GM12878 (cell line): ENCODE measurements at regions of chr2 and their contacts with region 1.

Region 1: GRCh38 chr2:6896930-6897759 is 19.6 kb downstream of the RSAD2 start:
- DNase-seq: no peak
- ATAC-seq: peak; percentile 64
- H3K4me3 ChIP-seq: no peak overlapping the region
- H3K27ac ChIP-seq: no peak overlapping the region
- H3K4me1 ChIP-seq: no peaks in the 10 kb centered on the region
- H3K27me3 ChIP-seq: no peaks in the 10 kb centered on the region
- CTCF ChIP-seq: peak; percentile 50 to 81 (median 68); a peak in 5 of 6 replicates
- EP300 ChIP-seq: no peak
- POLR2A ChIP-seq: no peak
- RAD21 ChIP-seq: peak; percentile 89

Region 2: DNA sequence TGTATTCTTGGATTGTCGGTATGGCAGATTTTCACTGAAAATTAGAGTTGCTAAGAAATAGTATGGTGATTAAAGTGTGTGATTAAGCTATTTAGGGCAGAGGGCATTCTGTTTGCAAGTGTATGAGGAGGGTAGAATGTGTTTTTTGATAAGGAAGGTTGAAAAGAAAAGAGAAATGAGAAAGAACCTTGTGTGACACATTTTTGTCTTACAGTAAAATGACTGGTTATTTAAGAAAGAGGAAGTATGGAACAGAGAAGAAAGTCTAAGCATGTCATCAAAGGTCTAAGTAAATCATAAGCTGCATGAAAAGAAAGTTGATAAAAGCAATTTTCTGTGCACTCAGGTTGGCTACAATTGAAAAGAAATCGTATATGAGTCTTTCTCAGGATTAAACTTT is 24.8 kb before region 1 on chr2:
- CTCF ChIA-PET with region 1: interaction called, 16 read pairs
- POLR2A ChIA-PET with region 1: no interaction called
- RAD21 ChIA-PET with region 1: interaction called, 6 read pairs
- SMC1A ChIA-PET with region 1: interaction called, 8 read pairs
- in situ Hi-C with region 1: no loop called
- intact Hi-C with region 1: no loop called
- DNase-seq: peak; percentile 12
- ATAC-seq: peak; percentile 78
- H3K4me3 ChIP-seq: no peak overlapping the region
- H3K27ac ChIP-seq: no peak overlapping the region
- H3K4me1 ChIP-seq: peaks cover 5% of the 10 kb centered on the region
- H3K27me3 ChIP-seq: no peaks in the 10 kb centered on the region
- CTCF ChIP-seq: no peak
- EP300 ChIP-seq: no peak
- POLR2A ChIP-seq: no peak
- RAD21 ChIP-seq: no peak

Region 3: DNA sequence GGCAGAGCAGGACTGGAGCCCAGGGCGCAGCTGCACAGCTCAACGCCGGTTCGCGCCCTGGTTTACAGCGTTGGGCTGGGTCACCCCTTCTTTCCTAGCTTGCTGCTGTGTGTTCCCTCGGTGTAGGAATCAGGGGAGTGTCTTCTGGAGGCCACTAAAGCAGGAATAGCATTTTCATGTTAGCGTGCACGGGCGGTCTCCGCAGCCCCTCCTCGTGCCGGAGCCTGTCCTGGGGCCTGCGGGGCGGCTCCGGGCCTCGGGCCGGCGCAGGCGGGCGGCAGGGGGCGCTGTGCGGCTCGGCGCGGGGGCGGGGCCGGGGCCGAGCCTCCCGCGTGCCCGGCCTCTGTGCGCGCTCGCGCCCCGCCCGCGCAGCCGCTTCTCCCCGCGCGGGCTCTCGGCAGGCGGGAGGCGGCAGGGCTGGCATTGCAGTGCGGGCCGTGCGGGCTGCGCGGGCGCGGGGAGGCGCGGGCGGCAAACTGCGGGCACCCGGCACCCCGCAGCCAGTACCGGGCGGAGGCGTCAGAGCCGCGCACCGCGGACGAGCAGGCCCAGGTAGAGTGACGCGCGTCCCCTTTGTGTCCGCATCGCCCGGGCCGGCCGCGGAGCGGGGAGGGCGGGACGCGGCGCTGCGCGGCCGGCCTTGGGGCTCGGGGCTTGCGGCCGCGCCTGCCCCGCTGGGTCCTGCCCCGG is 20.1 kb after region 1 on chr2 and contains the start of gene RNF144A:
- CTCF ChIA-PET with region 1: interaction called, 52 read pairs
- POLR2A ChIA-PET with region 1: no interaction called
- RAD21 ChIA-PET with region 1: interaction called, 19 read pairs
- SMC1A ChIA-PET with region 1: interaction called, 26 read pairs
- in situ Hi-C with region 1: no loop called
- intact Hi-C with region 1: loop called (anchors 1 kb)
- DNase-seq: no peak
- ATAC-seq: peak; percentile 87
- H3K4me3 ChIP-seq: peak within 1 kb of the TSS; percentile 78
- H3K27ac ChIP-seq: no peak within 1 kb of the TSS
- H3K4me1 ChIP-seq: peaks cover 10% of the 10 kb centered on the region; the same call in 1 of the 2 replicates
- H3K27me3 ChIP-seq: no peaks in the 10 kb centered on the region
- CTCF ChIP-seq: peak in 2 of 3 experiments; percentile 33 to 52; a peak in 3 of 6 replicates
- EP300 ChIP-seq: no peak
- POLR2A ChIP-seq: 0 out of 2 replicates have a peak, but pooled peaks have one; percentile 37
- RAD21 ChIP-seq: 0 out of 2 replicates have a peak, but pooled peaks have one; percentile 25
- polyA plus RNA-seq, gene RNF144A: 0.02 to 0.09 TPM

Region 4: GRCh38 chr2:6999211-6999877 is 102.2 kb after region 1 on chr2:
- CTCF ChIA-PET with region 1: interaction called, 52 read pairs
- POLR2A ChIA-PET with region 1: no interaction called
- RAD21 ChIA-PET with region 1: interaction called, 3 read pairs
- SMC1A ChIA-PET with region 1: interaction called, 9 read pairs
- in situ Hi-C with region 1: no loop called
- intact Hi-C with region 1: no loop called
- DNase-seq: peak; percentile 37
- ATAC-seq: peak; percentile 97
- H3K4me3 ChIP-seq: peak overlapping the region; percentile 7; the same call in 1 of the 2 replicates
- H3K27ac ChIP-seq: peak overlapping the region; percentile 42; the same call in 1 of the 2 replicates
- H3K4me1 ChIP-seq: peaks cover 17% of the 10 kb centered on the region
- H3K27me3 ChIP-seq: no peaks in the 10 kb centered on the region
- CTCF ChIP-seq: no peak
- EP300 ChIP-seq: no peak
- POLR2A ChIP-seq: no peak
- RAD21 ChIP-seq: no peak

Region 5: GRCh38 chr2:7037340-7038333 is 140.5 kb after region 1 on chr2:
- CTCF ChIA-PET with region 1: interaction called, 127 read pairs
- POLR2A ChIA-PET with region 1: no interaction called
- RAD21 ChIA-PET with region 1: interaction called, 40 read pairs
- SMC1A ChIA-PET with region 1: interaction called, 73 read pairs
- in situ Hi-C with region 1: no loop called
- intact Hi-C with region 1: no loop called
- DNase-seq: no peak
- ATAC-seq: peak; percentile 99
- H3K4me3 ChIP-seq: no peak overlapping the region
- H3K27ac ChIP-seq: no peak overlapping the region
- H3K4me1 ChIP-seq: no peaks in the 10 kb centered on the region
- H3K27me3 ChIP-seq: no peaks in the 10 kb centered on the region
- CTCF ChIP-seq: peak; percentile 78 to 81 (median 79)
- EP300 ChIP-seq: no peak
- POLR2A ChIP-seq: no peak
- RAD21 ChIP-seq: peak; percentile 64